Heart right ventricle (tissue), 16 donors: ENCODE measurements at regions of chr10 and their contacts with region 1.

Region 1: GRCh38 chr10:125742465-125742864 is 23.0 kb downstream of the EDRF1 start:
- DNase-seq: no peak
- ATAC-seq: no peak
- H3K4me3 ChIP-seq: no peak overlapping the region
- H3K27ac ChIP-seq: no peak overlapping the region
- H3K4me1 ChIP-seq: no peaks in the 10 kb centered on the region
- H3K27me3 ChIP-seq: no peaks in the 10 kb centered on the region
- CTCF ChIP-seq: no peak

Region 2: GRCh38 chr10:125768219-125768855 is 25.9 kb after region 1 on chr10:
- intact Hi-C with region 1: no loop called
- DNase-seq: no peak
- ATAC-seq: peak; percentile 62 to 78 (median 74)
- H3K4me3 ChIP-seq: no peak overlapping the region
- H3K27ac ChIP-seq: peak overlapping the region in 7 of 10 donors; percentile 15 to 76 (median 42)
- H3K4me1 ChIP-seq: peaks cover 0 to 29% (median 13%) of the 10 kb centered on the region in 9 donors
- H3K27me3 ChIP-seq: no peaks in the 10 kb centered on the region
- CTCF ChIP-seq: no peak

Region 3: GRCh38 chr10:125840406-125841353 is 98.2 kb after region 1 on chr10:
- intact Hi-C with region 1: loop called in 1 of 10 experiments (anchors 10 kb)
- DNase-seq: no peak
- ATAC-seq: no peak
- H3K4me3 ChIP-seq: no peak overlapping the region
- H3K27ac ChIP-seq: no peak overlapping the region
- H3K4me1 ChIP-seq: peaks cover 0 to 17% (median 14%) of the 10 kb centered on the region in 9 donors
- H3K27me3 ChIP-seq: no peaks in the 10 kb centered on the region
- CTCF ChIP-seq: no peak